MCF 10A (cell line): ENCODE measurements at regions of chr15 and their contacts with region 1.

Region 1: DNA sequence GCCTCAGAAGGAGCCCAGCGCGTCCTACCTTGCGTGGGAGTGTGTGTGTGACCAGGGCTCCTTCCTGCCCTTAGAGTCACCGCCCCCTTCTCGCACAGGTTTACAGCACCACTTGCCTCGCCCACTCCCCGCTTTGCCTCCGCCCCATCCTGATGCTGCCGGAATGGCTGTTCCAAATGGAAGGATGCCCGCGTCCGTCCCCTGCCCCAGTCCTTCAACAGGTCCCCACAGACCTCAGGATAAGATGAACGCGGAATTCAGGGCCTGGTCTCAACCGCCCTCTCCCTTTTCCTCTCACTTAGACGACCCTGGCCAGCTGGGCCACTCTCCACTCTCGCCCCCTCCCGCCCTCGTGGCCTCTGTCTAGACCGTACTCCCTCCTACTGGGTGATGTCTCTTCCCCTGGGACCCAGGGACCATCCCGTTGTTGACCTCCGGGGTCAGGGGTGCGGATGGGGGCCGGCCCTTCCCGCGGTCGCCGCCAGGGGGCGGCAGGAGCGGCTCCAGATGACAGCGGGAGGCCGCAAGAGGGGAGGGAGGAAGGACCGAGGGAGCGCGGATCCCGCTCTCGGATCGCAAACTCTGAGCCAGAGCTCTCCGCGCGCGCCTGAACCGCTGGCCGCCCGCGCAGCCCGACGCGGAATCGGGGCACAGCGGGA is at the start of gene THSD4:
- DNase-seq: peak; percentile 76
- H3K4me3 Mint-ChIP-seq: peak within 1 kb of the TSS; percentile 65
- H3K27ac Mint-ChIP-seq: peak within 1 kb of the TSS; percentile 40
- H3K4me1 Mint-ChIP-seq: peaks cover 36% of the 10 kb centered on the region
- H3K27me3 Mint-ChIP-seq: no peaks in the 10 kb centered on the region
- CTCF ChIP-seq: peak; percentile 97
- total RNA-seq, gene THSD4: 36.3 and 38.2 TPM in 2 replicates

Region 2: DNA sequence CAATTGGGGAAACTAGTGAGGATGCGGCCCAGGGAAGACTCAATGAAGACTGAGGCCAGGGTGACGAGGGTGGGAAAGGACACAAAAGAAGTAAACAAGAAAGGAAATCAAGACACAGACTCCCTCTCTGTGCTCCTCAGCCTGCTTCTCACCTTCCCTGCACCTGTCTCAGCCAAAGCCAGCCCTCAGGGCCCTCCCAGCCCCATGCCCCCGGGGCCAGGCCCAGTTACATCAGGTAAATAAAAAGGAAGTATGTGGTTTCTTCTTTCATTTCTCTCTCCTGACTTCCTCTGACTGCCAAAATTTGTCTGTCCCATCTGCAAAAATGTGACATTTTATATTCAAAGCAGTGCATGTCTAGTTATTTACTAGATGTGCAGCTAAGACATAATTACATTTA is 679.7 kb before region 1 on chr15:
- CTCF ChIA-PET with region 1: no interaction called
- POLR2A ChIA-PET with region 1: no interaction called
- intact Hi-C with region 1: no loop called
- DNase-seq: no peak
- H3K4me3 Mint-ChIP-seq: no peak overlapping the region
- H3K27ac Mint-ChIP-seq: no peak overlapping the region
- H3K4me1 Mint-ChIP-seq: peaks cover 15% of the 10 kb centered on the region
- H3K27me3 Mint-ChIP-seq: peaks cover 20% of the 10 kb centered on the region
- CTCF ChIP-seq: no peak

Region 3: GRCh38 chr15:71011503-71012155 is 103.4 kb before region 1 on chr15:
- CTCF ChIA-PET with region 1: interaction called, 11 read pairs
- POLR2A ChIA-PET with region 1: no interaction called
- intact Hi-C with region 1: loop called (anchors 5 kb)
- DNase-seq: peak; percentile 60
- H3K4me3 Mint-ChIP-seq: no peak overlapping the region
- H3K27ac Mint-ChIP-seq: no peak overlapping the region
- H3K4me1 Mint-ChIP-seq: no peaks in the 10 kb centered on the region
- H3K27me3 Mint-ChIP-seq: no peaks in the 10 kb centered on the region
- CTCF ChIP-seq: peak; percentile 76

Region 4: DNA sequence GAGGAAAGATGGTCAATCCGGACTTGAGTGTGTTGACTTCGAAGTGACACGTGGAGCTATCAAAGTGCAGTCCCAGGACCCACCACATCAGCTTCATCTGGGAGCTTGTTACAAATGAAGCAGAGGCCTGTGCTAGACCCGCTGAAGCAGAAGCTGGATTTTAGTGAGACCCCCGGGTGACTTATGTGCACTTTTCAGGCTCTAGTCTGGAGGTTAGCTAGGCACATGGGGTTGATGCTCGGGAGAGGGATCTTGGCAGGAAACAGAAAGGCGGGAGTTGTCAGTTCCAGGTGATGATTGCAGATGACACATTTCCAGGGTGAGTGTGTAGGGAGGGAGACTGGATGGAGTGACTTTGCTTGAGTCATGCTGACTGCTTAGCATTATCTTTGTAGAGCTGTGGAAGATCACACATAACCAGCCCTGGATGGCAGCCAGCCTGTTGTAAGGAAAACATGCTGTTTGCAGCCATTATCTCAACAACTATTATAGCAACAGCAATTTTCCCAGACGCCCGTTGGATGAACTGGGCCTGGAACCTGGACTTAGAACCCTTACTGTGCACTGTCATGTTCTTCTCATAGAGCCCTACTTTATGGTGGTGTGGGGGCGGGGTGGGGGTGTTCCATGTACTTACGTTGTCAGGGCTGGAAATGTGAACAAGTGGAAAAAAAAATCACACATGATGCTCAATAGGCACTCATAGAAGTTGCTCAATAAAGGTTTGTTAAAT is 122.6 kb after region 1 on chr15:
- CTCF ChIA-PET with region 1: interaction called, 4 read pairs
- POLR2A ChIA-PET with region 1: no interaction called
- intact Hi-C with region 1: loop called (anchors 2 kb)
- DNase-seq: peak; percentile 92
- H3K4me3 Mint-ChIP-seq: no peak overlapping the region
- H3K27ac Mint-ChIP-seq: no peak overlapping the region
- H3K4me1 Mint-ChIP-seq: peaks cover 26% of the 10 kb centered on the region
- H3K27me3 Mint-ChIP-seq: no peaks in the 10 kb centered on the region
- CTCF ChIP-seq: no peak